IMR-90 (cell line): ENCODE measurements at regions of chr6 and their contacts with region 1.

Region 1: GRCh38 chr6:158784505-158784904 is 34.7 kb downstream of the EZR start:
- DNase-seq: peak; percentile 70
- ATAC-seq: no peak
- H3K4me3 ChIP-seq: no peak overlapping the region
- H3K27ac ChIP-seq: no peak overlapping the region
- H3K4me1 ChIP-seq: peaks cover 2% of the 10 kb centered on the region; the same call in 1 of the 2 replicates
- H3K27me3 ChIP-seq: no peaks in the 10 kb centered on the region
- CTCF ChIP-seq: no peak
- POLR2A ChIP-seq: no peak
- RAD21 ChIP-seq: no peak

Region 2: GRCh38 chr6:158737710-158738615 is 46.5 kb before region 1 on chr6:
- CTCF ChIA-PET with region 1: no interaction called
- POLR2A ChIA-PET with region 1: no interaction called
- dilution Hi-C with region 1: no loop called
- in situ Hi-C with region 1: no loop called
- intact Hi-C with region 1: loop called (anchors 1 kb)
- DNase-seq: peak; percentile 65
- ATAC-seq: peak; percentile 65
- H3K4me3 ChIP-seq: no peak overlapping the region
- H3K27ac ChIP-seq: no peak overlapping the region
- H3K4me1 ChIP-seq: no peaks in the 10 kb centered on the region
- H3K27me3 ChIP-seq: no peaks in the 10 kb centered on the region
- CTCF ChIP-seq: no peak
- POLR2A ChIP-seq: no peak
- RAD21 ChIP-seq: no peak